ENCODE measurements at regions of chr15 and their contacts with region 1.

Region 1: DNA sequence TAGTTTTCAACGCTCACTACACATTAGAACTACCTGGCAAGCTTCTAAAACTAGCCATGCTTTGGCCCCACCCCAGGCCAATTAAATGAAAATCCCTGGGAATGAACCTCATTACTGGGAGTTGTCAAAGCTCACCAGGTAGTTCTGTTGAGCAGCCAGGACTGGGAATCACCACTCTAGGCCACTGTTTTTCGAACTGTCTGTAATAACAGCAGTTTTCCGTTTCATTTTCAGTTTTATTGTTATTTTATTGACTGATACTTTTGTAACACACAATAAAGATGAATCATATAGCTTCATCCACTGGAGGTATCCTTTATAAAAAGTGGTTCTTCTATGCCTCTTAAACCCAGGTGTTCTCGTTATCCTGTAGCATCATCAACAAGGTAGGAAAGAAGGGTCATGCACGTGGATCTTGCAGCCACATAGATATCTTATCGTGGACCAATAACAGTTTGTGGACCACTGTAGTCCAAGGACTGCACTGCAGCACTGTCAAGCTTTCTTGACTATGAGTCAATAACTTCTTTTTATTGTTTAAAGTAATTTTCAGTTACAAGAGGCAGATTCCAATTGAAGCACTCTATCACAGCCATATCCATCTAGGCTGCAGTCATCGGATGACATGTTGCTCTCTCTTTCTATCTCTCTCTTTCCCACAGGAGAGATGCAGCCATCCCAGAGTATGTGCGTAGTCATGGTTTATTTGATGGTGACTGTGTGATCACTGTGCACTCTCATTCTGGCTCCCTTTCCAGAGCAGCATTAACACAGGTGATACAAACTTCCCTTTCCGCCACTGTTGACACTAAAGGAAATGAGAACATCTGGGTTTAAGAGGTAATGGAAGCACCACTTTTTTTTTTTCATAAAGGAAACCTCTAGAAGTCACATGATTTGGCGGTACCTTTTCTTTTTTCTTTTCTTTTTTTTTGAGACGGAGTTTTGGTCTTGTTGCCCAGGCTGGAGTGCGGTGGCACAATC is 39.0 kb upstream of the BLM start:
- DNase-seq: peak in 4 of 14 experiments; percentile 33 to 75 (median 62)
- ATAC-seq: peak; percentile 96
- H3K4me3 ChIP-seq: no peak overlapping the region
- H3K4me3 Mint-ChIP-seq: peak overlapping the region; percentile 58
- H3K27ac ChIP-seq: no peak overlapping the region
- H3K27ac Mint-ChIP-seq: peak overlapping the region; percentile 21
- H3K4me1 ChIP-seq: peaks cover 19% of the 10 kb centered on the region
- H3K4me1 Mint-ChIP-seq: peaks cover 25% of the 10 kb centered on the region
- H3K27me3 ChIP-seq: no peaks in the 10 kb centered on the region
- H3K27me3 Mint-ChIP-seq: no peaks in the 10 kb centered on the region
- CTCF ChIP-seq: no peak

Region 2: GRCh38 chr15:90376789-90377188 is 301.3 kb before region 1 on chr15:
- CTCF ChIA-PET with region 1: no interaction called
- POLR2A ChIA-PET with region 1: no interaction called
- intact Hi-C with region 1: loop called in 1 of 2 experiments (anchors 5 kb)
- DNase-seq: peak; percentile 41 to 89 (median 52)
- ATAC-seq: peak; percentile 98
- H3K4me3 ChIP-seq: no peak overlapping the region
- H3K4me3 Mint-ChIP-seq: peak overlapping the region; percentile 70
- H3K27ac ChIP-seq: no peak overlapping the region
- H3K27ac Mint-ChIP-seq: peak overlapping the region; percentile 21
- H3K4me1 ChIP-seq: peaks cover 41% of the 10 kb centered on the region
- H3K4me1 Mint-ChIP-seq: peaks cover 56% of the 10 kb centered on the region
- H3K27me3 ChIP-seq: no peaks in the 10 kb centered on the region
- H3K27me3 Mint-ChIP-seq: no peaks in the 10 kb centered on the region
- CTCF ChIP-seq: no peak

Region 3: GRCh38 chr15:90665288-90666134 is 12.6 kb before region 1 on chr15:
- CTCF ChIA-PET with region 1: no interaction called
- POLR2A ChIA-PET with region 1: interaction called, 9 read pairs
- intact Hi-C with region 1: loop called in 1 of 2 experiments (anchors 2 kb)
- DNase-seq: peak in 9 of 14 experiments; percentile 14 to 54 (median 43)
- ATAC-seq: peak; percentile 51
- H3K4me3 ChIP-seq: peak overlapping the region; percentile 64
- H3K4me3 Mint-ChIP-seq: peak overlapping the region; percentile 81
- H3K27ac ChIP-seq: peak overlapping the region in 1 of 2 donors; percentile 35
- H3K27ac Mint-ChIP-seq: peak overlapping the region; percentile 19
- H3K4me1 ChIP-seq: peaks cover 49% of the 10 kb centered on the region
- H3K4me1 Mint-ChIP-seq: peaks cover 60% of the 10 kb centered on the region
- H3K27me3 ChIP-seq: peaks cover 0 to 12% of the 10 kb centered on the region in 2 experiments
- H3K27me3 Mint-ChIP-seq: peaks cover 11% of the 10 kb centered on the region
- CTCF ChIP-seq: no peak

Region 4: GRCh38 chr15:90701880-90702630 is 24.0 kb after region 1 on chr15:
- CTCF ChIA-PET with region 1: no interaction called
- POLR2A ChIA-PET with region 1: no interaction called
- intact Hi-C with region 1: no loop called
- DNase-seq: peak in 2 of 14 experiments; percentile 14 to 30
- ATAC-seq: no peak
- H3K4me3 ChIP-seq: no peak overlapping the region
- H3K4me3 Mint-ChIP-seq: no peak overlapping the region
- H3K27ac ChIP-seq: no peak overlapping the region
- H3K27ac Mint-ChIP-seq: no peak overlapping the region
- H3K4me1 ChIP-seq: peaks cover 2% of the 10 kb centered on the region
- H3K4me1 Mint-ChIP-seq: no peaks in the 10 kb centered on the region
- H3K27me3 ChIP-seq: no peaks in the 10 kb centered on the region
- H3K27me3 Mint-ChIP-seq: no peaks in the 10 kb centered on the region
- CTCF ChIP-seq: no peak

Region 5: DNA sequence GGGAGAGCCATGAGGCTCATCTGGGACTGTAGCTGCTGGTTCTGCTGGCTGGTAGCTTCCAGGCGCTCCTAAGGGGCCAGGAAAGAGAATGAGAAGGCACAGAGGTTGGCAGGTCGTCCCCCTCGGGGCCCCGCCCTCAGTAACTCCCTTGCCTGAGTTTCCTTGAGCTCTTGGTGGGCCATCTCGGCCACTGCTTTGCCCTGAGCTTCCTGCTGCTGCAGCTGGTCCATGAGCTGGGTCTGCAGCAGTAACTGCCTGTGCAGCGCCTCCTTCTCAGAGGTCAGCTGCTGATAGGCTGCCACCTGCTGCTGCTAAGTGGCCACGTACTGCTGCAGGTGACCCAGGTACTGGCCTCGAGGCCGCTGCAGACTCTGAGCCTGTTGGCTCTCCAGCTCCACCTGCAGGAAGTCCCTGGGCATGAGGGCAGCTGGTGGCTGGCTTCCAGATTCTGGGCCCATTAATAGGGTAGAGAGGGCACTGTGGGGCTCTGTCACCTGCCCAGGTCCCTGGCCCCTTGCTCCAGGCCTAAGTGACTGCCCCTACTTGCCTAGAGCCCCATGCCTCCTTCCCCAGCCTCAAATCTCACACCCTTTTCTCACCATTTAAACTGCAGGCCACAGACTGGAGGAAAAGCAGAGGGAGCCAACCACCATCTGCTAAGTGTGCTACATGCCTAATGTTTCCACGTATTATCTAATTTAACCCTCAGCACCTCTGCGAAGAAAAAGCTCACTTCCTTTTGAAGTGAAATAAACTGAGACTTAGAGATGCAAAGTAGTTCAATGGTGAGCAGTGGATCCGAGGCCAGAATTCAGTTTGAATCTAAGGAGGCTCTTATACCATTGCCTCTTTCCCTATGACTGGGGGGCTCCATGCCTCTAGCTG is 355.1 kb after region 1 on chr15:
- CTCF ChIA-PET with region 1: no interaction called
- POLR2A ChIA-PET with region 1: no interaction called
- intact Hi-C with region 1: no loop called
- DNase-seq: peak; percentile 26 to 74 (median 52)
- ATAC-seq: peak; percentile 64
- H3K4me3 ChIP-seq: no peak overlapping the region
- H3K4me3 Mint-ChIP-seq: no peak overlapping the region
- H3K27ac ChIP-seq: no peak overlapping the region
- H3K27ac Mint-ChIP-seq: no peak overlapping the region
- H3K4me1 ChIP-seq: peaks cover 6% of the 10 kb centered on the region
- H3K4me1 Mint-ChIP-seq: no peaks in the 10 kb centered on the region
- H3K27me3 ChIP-seq: peaks cover 0 to 4% of the 10 kb centered on the region in 2 experiments
- H3K27me3 Mint-ChIP-seq: no peaks in the 10 kb centered on the region
- CTCF ChIP-seq: peak; percentile 73

Region 6: GRCh38 chr15:91320101-91320500 is 642.0 kb after region 1 on chr15:
- CTCF ChIA-PET with region 1: no interaction called
- POLR2A ChIA-PET with region 1: no interaction called
- intact Hi-C with region 1: no loop called
- DNase-seq: peak in 2 of 14 experiments; percentile 22 to 82
- ATAC-seq: no peak
- H3K4me3 ChIP-seq: no peak overlapping the region
- H3K4me3 Mint-ChIP-seq: peak overlapping the region; percentile 49
- H3K27ac ChIP-seq: peak overlapping the region; percentile 58 to 61
- H3K27ac Mint-ChIP-seq: peak overlapping the region; percentile 77
- H3K4me1 ChIP-seq: peaks cover 34% of the 10 kb centered on the region
- H3K4me1 Mint-ChIP-seq: peaks cover 48% of the 10 kb centered on the region
- H3K27me3 ChIP-seq: no peaks in the 10 kb centered on the region
- H3K27me3 Mint-ChIP-seq: no peaks in the 10 kb centered on the region
- CTCF ChIP-seq: no peak

Measured in CD4-positive, alpha-beta T cell (primary cell).